AG04449 (cell line): ENCODE measurements at regions of chr7 and their contacts with region 1.

Region 1: DNA sequence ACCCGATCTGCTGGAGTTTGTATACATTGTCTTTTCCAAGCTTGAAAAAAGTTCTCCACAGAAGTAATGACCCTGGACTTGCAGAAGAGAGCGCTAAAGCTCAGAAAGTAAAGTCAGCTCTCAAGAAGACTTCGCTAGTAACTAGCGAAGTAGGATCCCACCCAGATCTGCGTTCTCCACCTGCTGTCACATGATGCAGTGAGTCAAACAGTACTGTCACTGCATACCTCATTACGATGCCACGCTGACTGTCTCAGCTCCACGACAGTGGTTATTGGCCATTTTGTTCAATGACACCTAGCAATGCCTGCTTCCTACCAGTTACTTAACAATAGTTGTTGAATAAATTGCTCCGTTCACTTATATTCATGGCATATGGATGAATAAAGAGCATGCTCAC is 29.7 kb upstream of the SEC61G start:
- DNase-seq: peak; percentile 57
- H3K4me3 ChIP-seq: no peak overlapping the region
- CTCF ChIP-seq: peak; percentile 63

Region 2: DNA sequence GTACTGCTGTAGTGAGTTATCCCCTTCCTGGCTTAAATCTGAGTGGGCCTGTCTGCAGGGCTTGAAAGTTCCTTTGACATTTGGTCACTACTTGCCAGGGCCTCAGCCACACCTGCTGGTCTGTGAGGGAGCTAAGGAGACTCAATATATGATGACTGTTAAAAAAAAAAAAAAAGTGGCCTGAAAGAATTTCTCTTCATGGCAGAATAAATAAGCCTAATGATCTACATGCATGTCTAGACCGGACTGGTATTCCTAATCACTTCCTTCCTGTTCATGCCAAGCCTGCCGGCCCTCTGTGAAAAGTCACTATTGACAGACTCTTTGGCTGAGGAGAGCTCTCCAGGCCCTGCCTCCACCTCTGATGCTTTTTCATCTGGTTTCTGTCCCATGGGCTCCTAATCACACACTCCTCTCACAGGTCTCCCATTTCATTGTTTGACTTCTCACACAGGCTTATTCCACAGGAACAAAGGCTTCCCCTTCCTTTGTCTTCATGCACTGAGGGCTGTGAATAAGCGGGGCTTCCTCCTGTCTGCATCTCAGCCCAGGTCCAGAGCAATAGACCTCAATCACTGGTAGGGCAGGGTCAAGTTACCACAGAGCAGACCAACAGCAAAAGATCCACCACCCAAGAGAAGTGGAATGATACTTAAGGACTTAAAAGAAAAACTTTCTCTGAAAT is 69.5 kb after region 1 on chr7:
- CTCF ChIA-PET with region 1: no interaction called
- POLR2A ChIA-PET with region 1: no interaction called
- DNase-seq: no peak
- H3K4me3 ChIP-seq: no peak overlapping the region
- CTCF ChIP-seq: no peak

Region 3: DNA sequence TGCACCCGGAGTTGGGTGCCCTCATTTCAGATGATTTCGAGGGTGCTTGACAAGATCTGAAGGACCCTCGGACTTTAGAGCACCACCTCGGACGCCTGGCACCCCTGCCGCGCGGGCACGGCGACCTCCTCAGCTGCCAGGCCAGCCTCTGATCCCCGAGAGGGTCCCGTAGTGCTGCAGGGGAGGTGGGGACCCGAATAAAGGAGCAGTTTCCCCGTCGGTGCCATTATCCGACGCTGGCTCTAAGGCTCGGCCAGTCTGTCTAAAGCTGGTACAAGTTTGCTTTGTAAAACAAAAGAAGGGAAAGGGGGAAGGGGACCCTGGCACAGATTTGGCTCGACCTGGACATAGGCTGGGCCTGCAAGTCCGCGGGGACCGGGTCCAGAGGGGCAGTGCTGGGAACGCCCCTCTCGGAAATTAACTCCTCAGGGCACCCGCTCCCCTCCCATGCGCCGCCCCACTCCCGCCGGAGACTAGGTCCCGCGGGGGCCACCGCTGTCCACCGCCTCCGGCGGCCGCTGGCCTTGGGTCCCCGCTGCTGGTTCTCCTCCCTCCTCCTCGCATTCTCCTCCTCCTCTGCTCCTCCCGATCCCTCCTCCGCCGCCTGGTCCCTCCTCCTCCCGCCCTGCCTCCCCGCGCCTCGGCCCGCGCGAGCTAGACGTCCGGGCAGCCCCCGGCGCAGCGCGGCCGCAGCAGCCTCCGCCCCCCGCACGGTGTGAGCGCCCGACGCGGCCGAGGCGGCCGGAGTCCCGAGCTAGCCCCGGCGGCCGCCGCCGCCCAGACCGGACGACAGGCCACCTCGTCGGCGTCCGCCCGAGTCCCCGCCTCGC is 229.9 kb after region 1 on chr7 and contains the start of gene EGFR:
- CTCF ChIA-PET with region 1: interaction called, 16 read pairs
- POLR2A ChIA-PET with region 1: no interaction called
- DNase-seq: no peak
- H3K4me3 ChIP-seq: peak within 1 kb of the TSS; percentile 75
- CTCF ChIP-seq: no peak

Region 4: GRCh38 chr7:55250313-55250712 is 461.6 kb after region 1 on chr7:
- CTCF ChIA-PET with region 1: interaction called, 555 read pairs
- POLR2A ChIA-PET with region 1: interaction called, 6 read pairs
- DNase-seq: no peak
- H3K4me3 ChIP-seq: no peak overlapping the region
- CTCF ChIP-seq: peak; percentile 25

Region 5: GRCh38 chr7:55265836-55266642 is 477.4 kb after region 1 on chr7:
- CTCF ChIA-PET with region 1: interaction called, 399 read pairs
- POLR2A ChIA-PET with region 1: no interaction called
- DNase-seq: no peak
- H3K4me3 ChIP-seq: no peak overlapping the region
- CTCF ChIP-seq: no peak